ENCODE measurements at regions of chr7 and their contacts with region 1.

Region 1: GRCh38 chr7:38335492-38336147 is 62.2 kb upstream of the TARP start:
- DNase-seq: peak; percentile 58 to 78 (median 73)
- ATAC-seq: peak; percentile 97
- H3K4me3 ChIP-seq: peak overlapping the region; percentile 42
- H3K4me3 Mint-ChIP-seq: peak overlapping the region; percentile 54 to 76 (median 64)
- H3K27ac ChIP-seq: peak overlapping the region; percentile 52
- H3K27ac Mint-ChIP-seq: peak overlapping the region; percentile 48 to 92 (median 77)
- H3K4me1 ChIP-seq: peaks cover 16 to 21% of the 10 kb centered on the region in 2 donors
- H3K4me1 Mint-ChIP-seq: peaks cover 8 to 46% (median 36%) of the 10 kb centered on the region in 7 donors
- H3K27me3 ChIP-seq: no peaks in the 10 kb centered on the region
- H3K27me3 Mint-ChIP-seq: no peaks in the 10 kb centered on the region

Region 2: DNA sequence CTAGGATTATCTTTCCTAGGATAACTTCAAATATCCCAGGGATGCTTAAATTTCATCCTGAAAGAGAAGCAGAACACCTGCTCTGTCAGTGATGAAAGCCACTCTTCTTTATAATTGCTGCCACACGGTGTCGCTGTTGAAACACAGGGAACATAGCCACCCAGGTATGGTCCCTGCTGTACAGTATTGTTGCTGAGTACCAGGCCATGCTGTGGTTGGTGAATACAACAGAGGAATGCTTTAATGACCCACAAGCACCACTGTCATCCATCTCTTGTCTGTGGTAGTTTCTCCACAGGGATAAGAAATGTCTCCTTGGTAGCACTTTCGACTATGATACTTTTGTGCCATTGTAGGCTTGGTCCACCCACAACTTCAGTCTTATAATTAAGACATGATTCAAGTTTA is 228.1 kb before region 1 on chr7:
- CTCF ChIA-PET with region 1: interaction called, 15 read pairs
- POLR2A ChIA-PET with region 1: no interaction called
- intact Hi-C with region 1: loop called (anchors 1 kb)
- DNase-seq: peak; percentile 16 to 58 (median 44)
- ATAC-seq: peak; percentile 88
- H3K4me3 ChIP-seq: no peak overlapping the region
- H3K4me3 Mint-ChIP-seq: no peak overlapping the region
- H3K27ac ChIP-seq: no peak overlapping the region
- H3K27ac Mint-ChIP-seq: no peak overlapping the region
- H3K4me1 ChIP-seq: no peaks in the 10 kb centered on the region
- H3K4me1 Mint-ChIP-seq: peaks cover 0 to 2% (median 0%) of the 10 kb centered on the region in 7 donors
- H3K27me3 ChIP-seq: no peaks in the 10 kb centered on the region
- H3K27me3 Mint-ChIP-seq: peaks cover 18 to 43% (median 23%) of the 10 kb centered on the region in 5 donors

Region 3: GRCh38 chr7:38215735-38216670 is 119.6 kb before region 1 on chr7:
- CTCF ChIA-PET with region 1: interaction called, 78 read pairs
- POLR2A ChIA-PET with region 1: no interaction called
- intact Hi-C with region 1: loop called (anchors 1 kb)
- DNase-seq: peak; percentile 50 to 73 (median 65)
- ATAC-seq: peak; percentile 95
- H3K4me3 ChIP-seq: no peak overlapping the region
- H3K4me3 Mint-ChIP-seq: peak overlapping the region in 5 of 10 donors; percentile 1 to 45 (median 27)
- H3K27ac ChIP-seq: peak overlapping the region; percentile 27
- H3K27ac Mint-ChIP-seq: peak overlapping the region in 7 of 9 donors; percentile 5 to 72 (median 47)
- H3K4me1 ChIP-seq: peaks cover 8 to 57% of the 10 kb centered on the region in 2 donors
- H3K4me1 Mint-ChIP-seq: peaks cover 7 to 34% (median 10%) of the 10 kb centered on the region in 7 donors
- H3K27me3 ChIP-seq: no peaks in the 10 kb centered on the region
- H3K27me3 Mint-ChIP-seq: no peaks in the 10 kb centered on the region

Region 4: DNA sequence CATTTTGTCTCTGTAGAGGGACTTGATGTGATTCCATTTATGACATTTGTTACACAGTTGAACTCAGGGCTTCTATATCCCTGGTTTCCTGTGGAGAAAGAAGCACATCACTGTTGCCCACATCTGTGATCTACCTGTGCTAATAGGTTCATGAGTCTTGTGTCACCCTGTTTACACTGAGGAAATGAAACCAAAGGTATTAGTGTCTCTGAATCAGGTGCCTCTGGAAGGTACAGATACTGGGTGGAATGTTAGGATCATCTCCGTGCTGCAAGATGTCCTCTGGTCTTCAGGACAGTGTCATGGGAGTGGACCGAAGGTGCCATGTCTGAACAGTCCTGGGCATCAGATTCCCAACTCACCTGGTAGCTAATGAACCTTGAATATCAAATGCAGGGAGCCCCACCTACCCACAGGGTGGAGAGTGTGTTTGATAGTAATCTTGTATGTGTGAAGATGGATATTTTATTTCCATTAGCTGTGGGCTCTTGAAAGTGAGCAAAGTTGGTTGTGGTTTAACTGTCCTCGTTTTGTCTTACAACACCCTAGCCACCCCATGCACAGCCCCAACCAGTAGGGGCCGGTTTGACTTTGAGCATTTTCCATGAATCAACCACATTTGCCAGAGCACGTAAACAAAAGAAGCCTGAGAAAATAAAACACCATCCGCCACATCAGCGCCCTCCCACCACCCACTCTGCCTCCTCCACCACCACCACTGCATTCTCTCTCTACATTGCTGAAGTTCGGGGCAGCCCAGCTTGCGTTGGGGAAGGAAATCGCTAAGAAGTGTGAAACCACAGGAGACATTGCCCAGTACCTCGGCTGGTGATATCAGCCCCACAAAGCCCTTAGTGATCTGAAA is 102.9 kb before region 1 on chr7:
- CTCF ChIA-PET with region 1: interaction called, 3 read pairs
- POLR2A ChIA-PET with region 1: interaction called, 3 read pairs
- intact Hi-C with region 1: loop called in 1 of 2 experiments (anchors 1 kb)
- DNase-seq: peak; percentile 13 to 78 (median 47)
- ATAC-seq: peak; percentile 91
- H3K4me3 ChIP-seq: peak overlapping the region; percentile 2
- H3K4me3 Mint-ChIP-seq: peak overlapping the region; percentile 18 to 88 (median 67)
- H3K27ac ChIP-seq: peak overlapping the region; percentile 34
- H3K27ac Mint-ChIP-seq: peak overlapping the region; percentile 26 to 94 (median 89)
- H3K4me1 ChIP-seq: peaks cover 16 to 84% of the 10 kb centered on the region in 2 donors
- H3K4me1 Mint-ChIP-seq: peaks cover 17 to 72% (median 48%) of the 10 kb centered on the region in 7 donors
- H3K27me3 ChIP-seq: no peaks in the 10 kb centered on the region
- H3K27me3 Mint-ChIP-seq: no peaks in the 10 kb centered on the region

Region 5: GRCh38 chr7:38318803-38319416 is 16.7 kb before region 1 on chr7:
- CTCF ChIA-PET with region 1: interaction called, 30 read pairs
- POLR2A ChIA-PET with region 1: interaction called, 6 read pairs
- intact Hi-C with region 1: loop called in 1 of 2 experiments (anchors 1 kb)
- DNase-seq: no peak
- ATAC-seq: peak; percentile 58
- H3K4me3 ChIP-seq: no peak overlapping the region
- H3K4me3 Mint-ChIP-seq: peak overlapping the region in 8 of 10 donors; percentile 2 to 77 (median 46)
- H3K27ac ChIP-seq: no peak overlapping the region
- H3K27ac Mint-ChIP-seq: peak overlapping the region; percentile 34 to 92 (median 81)
- H3K4me1 ChIP-seq: peaks cover 23 to 24% of the 10 kb centered on the region in 2 donors
- H3K4me1 Mint-ChIP-seq: peaks cover 5 to 50% (median 32%) of the 10 kb centered on the region in 7 donors
- H3K27me3 ChIP-seq: no peaks in the 10 kb centered on the region
- H3K27me3 Mint-ChIP-seq: no peaks in the 10 kb centered on the region

Region 6: DNA sequence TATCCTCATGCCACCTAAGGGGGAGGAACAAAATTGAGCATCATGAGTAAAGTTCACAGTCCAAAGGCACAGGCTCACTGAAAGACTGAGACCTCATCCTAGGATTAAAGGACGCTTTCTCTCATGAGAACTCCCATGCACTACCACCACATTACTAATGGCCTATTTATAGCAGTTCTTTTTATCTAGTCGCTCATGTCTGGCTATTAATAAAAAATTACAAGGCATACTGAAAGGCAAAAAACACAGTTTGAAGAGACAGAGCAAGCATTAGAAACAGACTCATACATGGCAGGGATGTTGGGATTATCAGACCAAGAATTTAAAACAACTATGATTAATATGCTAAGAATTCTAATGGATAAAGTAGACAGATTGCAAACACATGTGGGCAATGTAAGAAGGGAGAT is 1568.5 kb after region 1 on chr7:
- CTCF ChIA-PET with region 1: interaction called, 11 read pairs
- POLR2A ChIA-PET with region 1: no interaction called
- intact Hi-C with region 1: no loop called
- DNase-seq: no peak
- ATAC-seq: no peak
- H3K4me3 ChIP-seq: no peak overlapping the region
- H3K4me3 Mint-ChIP-seq: no peak overlapping the region
- H3K27ac ChIP-seq: no peak overlapping the region
- H3K27ac Mint-ChIP-seq: no peak overlapping the region
- H3K4me1 ChIP-seq: no peaks in the 10 kb centered on the region
- H3K4me1 Mint-ChIP-seq: no peaks in the 10 kb centered on the region
- H3K27me3 ChIP-seq: no peaks in the 10 kb centered on the region
- H3K27me3 Mint-ChIP-seq: peaks cover 0 to 8% (median 3%) of the 10 kb centered on the region in 5 donors

Measured in naive thymus-derived CD4-positive, alpha-beta T cell (primary cell).